ENCODE measurements at regions of chr7 and their contacts with region 1.

Region 1: GRCh38 chr7:5494683-5495561 is 71.3 kb upstream of the TNRC18 start:
- DNase-seq: peak; percentile 56 to 87 (median 79)
- ATAC-seq: peak; percentile 87
- H3K4me3 ChIP-seq: peak overlapping the region; percentile 29 to 48
- H3K4me3 Mint-ChIP-seq: peak overlapping the region; percentile 54
- H3K27ac ChIP-seq: no peak overlapping the region
- H3K27ac Mint-ChIP-seq: peak overlapping the region; percentile 62
- H3K4me1 ChIP-seq: peaks cover 28% of the 10 kb centered on the region
- H3K4me1 Mint-ChIP-seq: peaks cover 34% of the 10 kb centered on the region
- H3K27me3 ChIP-seq: no peaks in the 10 kb centered on the region
- H3K27me3 Mint-ChIP-seq: no peaks in the 10 kb centered on the region
- CTCF ChIP-seq: peak; percentile 93

Region 2: DNA sequence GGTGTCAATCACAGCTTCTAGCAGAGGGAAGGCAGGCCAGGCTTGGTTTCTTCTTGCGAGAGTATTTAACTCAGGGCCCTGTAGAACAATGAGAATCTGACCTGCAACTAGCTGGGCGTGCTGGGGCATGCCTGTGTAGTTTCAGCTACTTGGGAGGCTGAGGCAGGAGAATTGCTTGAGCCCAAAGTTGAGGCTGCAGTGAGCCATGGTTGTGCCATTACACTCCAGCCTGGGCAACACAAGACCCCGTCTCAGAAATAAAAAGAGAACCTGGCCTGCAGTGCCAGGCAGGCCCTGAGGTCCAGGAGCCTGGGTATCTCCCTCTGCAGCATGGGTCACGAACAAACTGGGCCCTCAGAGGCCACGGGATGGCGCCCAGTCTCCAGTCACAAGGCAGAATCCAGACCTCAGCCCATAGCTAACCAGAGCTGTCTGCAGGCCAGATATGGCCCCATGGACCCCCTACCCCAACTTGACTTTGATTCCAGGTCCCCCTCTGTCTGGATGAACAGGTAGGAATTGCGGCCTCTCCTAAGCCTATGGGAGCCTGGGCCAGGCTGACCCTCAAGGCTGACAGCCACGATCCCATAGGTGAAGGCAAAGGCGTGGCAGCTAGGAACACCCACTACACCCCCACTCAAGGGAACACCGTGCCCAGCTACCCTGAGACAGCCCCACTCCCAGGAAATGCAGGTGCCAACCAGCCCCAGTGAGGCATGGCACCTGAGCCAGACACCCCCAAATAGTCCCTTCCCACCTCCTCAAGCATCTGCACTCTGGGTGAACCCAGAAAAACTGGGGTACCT is 31.4 kb after region 1 on chr7:
- CTCF ChIA-PET with region 1: interaction called, 5 read pairs
- POLR2A ChIA-PET with region 1: interaction called, 4 read pairs
- intact Hi-C with region 1: loop called in 1 of 2 experiments (anchors 1 kb)
- DNase-seq: peak in 5 of 9 experiments; percentile 20 to 68 (median 38)
- ATAC-seq: no peak
- H3K4me3 ChIP-seq: peak overlapping the region; percentile 69 to 87
- H3K4me3 Mint-ChIP-seq: peak overlapping the region; percentile 98
- H3K27ac ChIP-seq: peak overlapping the region in 1 of 2 experiments; percentile 78
- H3K27ac Mint-ChIP-seq: peak overlapping the region; percentile 96
- H3K4me1 ChIP-seq: peaks cover 18% of the 10 kb centered on the region
- H3K4me1 Mint-ChIP-seq: peaks cover 37% of the 10 kb centered on the region
- H3K27me3 ChIP-seq: no peaks in the 10 kb centered on the region
- H3K27me3 Mint-ChIP-seq: no peaks in the 10 kb centered on the region
- CTCF ChIP-seq: no peak

Region 3: DNA sequence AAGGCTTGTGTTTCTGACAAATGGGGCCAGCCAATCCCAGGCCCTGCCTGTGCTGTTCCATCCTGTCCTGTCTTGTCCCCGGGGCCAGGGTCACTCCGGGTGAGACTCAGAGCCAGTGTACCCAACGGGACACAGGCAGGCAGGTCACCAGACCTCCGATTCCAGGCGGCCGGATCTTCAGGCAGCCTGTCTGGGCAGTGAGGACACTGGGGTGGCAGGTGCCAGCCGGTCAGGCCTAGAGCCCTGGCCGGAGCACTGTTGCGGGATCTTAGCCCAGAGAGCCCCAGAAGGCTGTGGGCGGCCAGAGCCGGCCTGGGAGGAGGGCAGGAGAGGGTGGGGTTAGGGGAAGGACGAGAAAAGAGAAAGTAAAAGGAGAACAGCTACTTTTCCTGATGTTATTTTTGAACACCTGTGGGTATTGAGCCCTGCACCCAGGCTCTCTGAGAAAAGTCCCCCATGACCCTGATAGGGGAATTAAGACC is 63.0 kb after region 1 on chr7:
- CTCF ChIA-PET with region 1: interaction called, 5 read pairs
- POLR2A ChIA-PET with region 1: interaction called, 14 read pairs
- intact Hi-C with region 1: loop called (anchors 1 kb)
- DNase-seq: peak in 2 of 9 experiments; percentile 33 to 60
- ATAC-seq: no peak
- H3K4me3 ChIP-seq: peak overlapping the region; percentile 10 to 40
- H3K4me3 Mint-ChIP-seq: peak overlapping the region; percentile 84
- H3K27ac ChIP-seq: peak overlapping the region; percentile 19 to 74
- H3K27ac Mint-ChIP-seq: peak overlapping the region; percentile 93
- H3K4me1 ChIP-seq: peaks cover 47% of the 10 kb centered on the region
- H3K4me1 Mint-ChIP-seq: peaks cover 48% of the 10 kb centered on the region
- H3K27me3 ChIP-seq: peaks cover 0 to 9% of the 10 kb centered on the region in 2 experiments
- H3K27me3 Mint-ChIP-seq: peaks cover 2% of the 10 kb centered on the region
- CTCF ChIP-seq: no peak

Region 4: GRCh38 chr7:5672468-5672867 is 177.5 kb after region 1 on chr7:
- CTCF ChIA-PET with region 1: interaction called, 54 read pairs
- POLR2A ChIA-PET with region 1: no interaction called
- intact Hi-C with region 1: no loop called
- DNase-seq: no peak
- ATAC-seq: no peak
- H3K4me3 ChIP-seq: no peak overlapping the region
- H3K4me3 Mint-ChIP-seq: no peak overlapping the region
- H3K27ac ChIP-seq: no peak overlapping the region
- H3K27ac Mint-ChIP-seq: peak overlapping the region; percentile 68
- H3K4me1 ChIP-seq: peaks cover 5% of the 10 kb centered on the region
- H3K4me1 Mint-ChIP-seq: peaks cover 25% of the 10 kb centered on the region
- H3K27me3 ChIP-seq: no peaks in the 10 kb centered on the region
- H3K27me3 Mint-ChIP-seq: no peaks in the 10 kb centered on the region
- CTCF ChIP-seq: no peak

Region 5: DNA sequence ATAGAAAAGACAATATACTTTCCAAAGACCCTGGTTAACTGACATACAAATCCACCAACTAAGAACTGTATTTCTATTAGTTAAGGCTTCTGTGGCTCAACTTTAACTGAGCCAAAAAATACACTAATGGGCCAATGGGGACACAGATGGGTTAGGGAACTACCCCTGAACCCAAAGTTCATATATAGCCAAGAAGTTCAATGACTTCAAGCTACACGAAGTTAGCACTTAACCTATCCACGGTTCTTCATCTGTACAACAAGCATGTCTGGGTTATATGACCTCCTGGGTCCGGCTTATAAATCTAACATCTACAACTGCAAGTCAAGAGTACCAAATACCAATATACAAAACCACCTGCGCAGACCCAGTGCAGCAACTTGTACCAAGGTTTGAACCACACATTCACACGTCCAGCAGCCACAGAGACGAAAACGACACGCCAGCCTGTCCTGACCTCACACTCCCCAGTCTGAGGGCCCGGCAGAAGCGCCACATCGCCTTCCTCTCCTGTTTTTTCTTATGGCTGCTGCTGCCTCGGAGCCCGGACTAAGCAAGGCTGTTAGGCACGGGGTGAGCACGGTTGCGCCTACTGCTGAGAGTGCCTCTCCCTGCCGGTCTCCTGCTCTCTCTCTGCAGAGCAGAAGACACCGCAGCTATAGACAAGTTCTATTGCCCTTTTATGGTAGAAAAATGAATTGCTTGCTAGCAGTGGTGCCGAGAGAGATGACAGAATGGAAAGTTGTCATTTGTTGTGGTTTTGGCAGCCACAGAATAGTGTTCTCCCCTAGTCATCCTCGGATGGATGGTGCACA is 200.2 kb after region 1 on chr7:
- CTCF ChIA-PET with region 1: interaction called, 24 read pairs
- POLR2A ChIA-PET with region 1: interaction called, 4 read pairs
- intact Hi-C with region 1: no loop called
- DNase-seq: peak; percentile 18 to 88 (median 72)
- ATAC-seq: peak; percentile 75
- H3K4me3 ChIP-seq: peak overlapping the region; percentile 49 to 64
- H3K4me3 Mint-ChIP-seq: peak overlapping the region; percentile 92
- H3K27ac ChIP-seq: peak overlapping the region; percentile 54 to 65
- H3K27ac Mint-ChIP-seq: peak overlapping the region; percentile 96
- H3K4me1 ChIP-seq: peaks cover 97% of the 10 kb centered on the region
- H3K4me1 Mint-ChIP-seq: peaks cover 100% of the 10 kb centered on the region
- H3K27me3 ChIP-seq: no peaks in the 10 kb centered on the region
- H3K27me3 Mint-ChIP-seq: no peaks in the 10 kb centered on the region
- CTCF ChIP-seq: no peak

Region 6: GRCh38 chr7:5822742-5823503 is 328.0 kb after region 1 on chr7:
- CTCF ChIA-PET with region 1: interaction called, 8 read pairs
- POLR2A ChIA-PET with region 1: no interaction called
- intact Hi-C with region 1: loop called (anchors 2 to 5 kb)
- DNase-seq: peak; percentile 95 to 100 (median 98)
- ATAC-seq: peak; percentile 81
- H3K4me3 ChIP-seq: peak overlapping the region; percentile 88 to 99
- H3K4me3 Mint-ChIP-seq: peak overlapping the region; percentile 91
- H3K27ac ChIP-seq: peak overlapping the region; percentile 91 to 96
- H3K27ac Mint-ChIP-seq: peak overlapping the region; percentile 91
- H3K4me1 ChIP-seq: peaks cover 29% of the 10 kb centered on the region
- H3K4me1 Mint-ChIP-seq: peaks cover 27% of the 10 kb centered on the region
- H3K27me3 ChIP-seq: no peaks in the 10 kb centered on the region
- H3K27me3 Mint-ChIP-seq: no peaks in the 10 kb centered on the region
- CTCF ChIP-seq: no peak

Region 7: DNA sequence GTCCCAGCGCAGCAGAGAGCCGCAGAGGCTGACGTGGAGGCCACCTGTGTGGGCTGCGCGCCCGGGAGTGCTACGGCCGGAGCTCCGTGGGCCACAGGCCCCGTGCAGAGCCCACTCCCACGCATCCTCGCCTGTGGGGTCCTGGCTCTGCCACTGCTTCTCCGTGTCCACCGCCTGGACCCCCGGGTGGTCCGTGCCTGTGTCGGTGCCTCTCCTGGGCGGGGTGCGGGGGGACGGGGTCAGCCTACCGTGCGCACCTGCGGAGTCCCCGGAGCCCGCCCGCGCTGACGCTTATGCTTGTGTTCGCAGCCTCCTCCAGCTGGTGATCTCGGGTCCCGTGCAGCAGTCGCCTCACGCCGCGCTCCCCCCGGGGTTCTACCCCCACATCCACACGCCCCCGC is 1112.7 kb after region 1 on chr7:
- CTCF ChIA-PET with region 1: no interaction called
- POLR2A ChIA-PET with region 1: no interaction called
- intact Hi-C with region 1: no loop called
- DNase-seq: no peak
- ATAC-seq: no peak
- H3K4me3 ChIP-seq: no peak overlapping the region
- H3K4me3 Mint-ChIP-seq: no peak overlapping the region
- H3K27ac ChIP-seq: no peak overlapping the region
- H3K27ac Mint-ChIP-seq: no peak overlapping the region
- H3K4me1 ChIP-seq: no peaks in the 10 kb centered on the region
- H3K4me1 Mint-ChIP-seq: peaks cover 3% of the 10 kb centered on the region
- H3K27me3 ChIP-seq: no peaks in the 10 kb centered on the region
- H3K27me3 Mint-ChIP-seq: no peaks in the 10 kb centered on the region
- CTCF ChIP-seq: no peak

Measured in CD8-positive, alpha-beta T cell (primary cell).